Heart left ventricle (tissue), 16 donors: ENCODE measurements at regions of chr3 and their contacts with region 1.

Region 1: GRCh38 chr3:186617038-186617946 is 4.4 kb downstream of the AHSG start:
- DNase-seq: peak; percentile 75 to 92 (median 84)
- ATAC-seq: peak; percentile 83 to 97 (median 96)
- H3K4me3 ChIP-seq: peak overlapping the region in 5 of 12 donors; percentile 2 to 30 (median 27)
- H3K27ac ChIP-seq: peak overlapping the region in 1 of 12 donors; percentile 25
- H3K4me1 ChIP-seq: peaks cover 0 to 19% (median 4%) of the 10 kb centered on the region in 12 donors
- H3K27me3 ChIP-seq: peaks cover 0 to 46% (median 0%) of the 10 kb centered on the region in 9 donors
- CTCF ChIP-seq: peak; percentile 74 to 90 (median 82)
- POLR2A ChIP-seq: no peak

Region 2: DNA sequence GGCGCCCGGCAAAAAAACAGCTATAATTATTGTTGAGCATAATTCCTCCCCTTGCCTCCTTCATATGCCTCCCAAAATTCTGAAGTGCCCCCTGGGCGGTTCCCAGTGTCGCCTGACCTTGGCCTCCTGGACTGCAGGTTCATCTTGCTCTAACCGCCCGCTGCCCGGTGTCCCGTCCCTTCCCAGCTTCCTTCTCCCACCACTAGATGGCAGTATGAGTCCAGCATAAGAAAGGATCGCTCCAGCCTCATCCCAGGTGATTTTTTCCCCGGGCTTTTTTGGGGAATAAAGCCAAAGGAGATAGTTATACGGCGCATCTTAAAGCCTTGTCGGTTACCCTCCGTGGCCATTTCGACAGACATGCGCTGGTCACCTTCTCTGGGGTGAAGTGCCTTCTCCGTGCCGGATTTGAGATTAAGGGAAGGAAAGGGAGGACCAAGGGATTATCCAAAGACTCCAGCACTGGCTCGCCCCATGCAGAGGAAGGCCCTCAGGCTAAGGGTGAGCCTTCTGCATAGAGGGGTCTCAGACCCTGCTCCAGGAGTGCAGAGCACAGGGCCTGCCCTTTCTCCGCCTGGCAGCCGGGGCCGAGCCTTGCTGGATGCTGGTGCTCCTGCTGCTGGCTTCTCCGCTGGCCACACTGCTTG is 633.7 kb before region 1 on chr3:
- intact Hi-C with region 1: loop called in 5 of 10 experiments (anchors 2 to 10 kb)
- DNase-seq: peak; percentile 57 to 75 (median 66)
- ATAC-seq: peak; percentile 82 to 96 (median 94)
- H3K4me3 ChIP-seq: peak overlapping the region in 1 of 12 donors; percentile 26
- H3K27ac ChIP-seq: no peak overlapping the region
- H3K4me1 ChIP-seq: peaks cover 0 to 14% (median 4%) of the 10 kb centered on the region in 12 donors
- H3K27me3 ChIP-seq: peaks cover 0 to 11% (median 0%) of the 10 kb centered on the region in 9 donors
- CTCF ChIP-seq: peak; percentile 79 to 96 (median 89)
- POLR2A ChIP-seq: no peak

Region 3: GRCh38 chr3:186361762-186362536 is 255.3 kb before region 1 on chr3 and contains the start of gene DGKG:
- intact Hi-C with region 1: no loop called
- DNase-seq: peak; percentile 68 to 81 (median 76)
- ATAC-seq: peak; percentile 63 to 85 (median 82)
- H3K4me3 ChIP-seq: peak within 1 kb of the TSS; percentile 51 to 89 (median 67)
- H3K27ac ChIP-seq: peak within 1 kb of the TSS; percentile 19 to 94 (median 78)
- H3K4me1 ChIP-seq: peaks cover 0 to 36% (median 25%) of the 10 kb centered on the region in 12 donors
- H3K27me3 ChIP-seq: peaks cover 0 to 40% (median 4%) of the 10 kb centered on the region in 9 donors
- CTCF ChIP-seq: no peak
- POLR2A ChIP-seq: peak; percentile 47 to 73
- total RNA-seq, gene DGKG: 21.6 to 59.3 (median 35.9) TPM

Region 4: DNA sequence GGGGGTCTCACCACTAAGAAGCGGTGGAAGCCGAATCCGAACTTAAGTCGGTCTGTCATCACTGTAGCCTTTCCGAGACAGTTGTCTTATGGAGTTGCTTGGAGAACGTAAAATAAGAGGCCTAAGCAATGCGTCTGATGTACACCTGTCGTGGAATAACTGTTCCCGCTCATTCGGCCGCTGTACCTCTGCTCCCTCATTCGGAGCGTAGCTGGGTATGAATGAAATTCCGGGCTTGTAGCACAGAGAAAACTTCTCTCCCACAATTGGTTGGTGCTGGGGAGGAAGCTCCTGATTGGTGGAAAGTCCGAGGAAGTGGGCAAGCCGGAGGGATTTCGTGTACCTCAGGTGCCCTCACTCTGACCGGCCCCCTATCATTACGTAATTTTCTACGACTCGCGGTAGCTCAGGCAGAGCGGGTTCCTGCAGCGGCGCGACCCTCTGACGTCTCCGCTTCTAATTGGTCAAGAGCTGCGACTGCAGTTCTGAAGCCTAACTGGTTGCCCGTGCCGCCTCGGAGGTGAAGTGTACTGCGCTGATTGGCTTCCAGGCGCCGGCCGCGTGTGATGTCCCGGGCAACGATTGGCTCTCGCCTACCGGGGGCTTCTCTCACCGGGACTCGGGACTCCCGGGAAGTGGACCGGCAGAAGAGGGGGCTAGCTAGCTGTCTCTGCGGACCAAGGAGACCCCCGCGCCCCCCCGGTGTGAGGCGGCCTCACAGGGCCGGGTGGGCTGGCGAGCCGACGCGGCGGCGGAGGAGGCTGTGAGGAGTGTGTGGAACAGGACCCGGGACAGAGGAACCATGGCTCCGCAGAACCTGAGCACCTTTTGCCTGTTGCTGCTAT is 47.0 kb before region 1 on chr3 and contains the start of gene DNAJB11:
- intact Hi-C with region 1: no loop called
- DNase-seq: peak; percentile 99 to 100 (median 99)
- ATAC-seq: peak; percentile 94 to 97 (median 96)
- H3K4me3 ChIP-seq: peak within 1 kb of the TSS; percentile 71 to 99 (median 90)
- H3K27ac ChIP-seq: peak within 1 kb of the TSS; percentile 43 to 95 (median 88)
- H3K4me1 ChIP-seq: peaks cover 5 to 47% (median 32%) of the 10 kb centered on the region in 12 donors
- H3K27me3 ChIP-seq: no peaks in the 10 kb centered on the region
- CTCF ChIP-seq: no peak
- POLR2A ChIP-seq: peak in 1 of 2 donors; percentile 68
- total RNA-seq, gene DNAJB11: 17.3 to 37.7 (median 25.2) TPM

Region 5: GRCh38 chr3:186754006-186754405 is 136.7 kb after region 1 on chr3:
- intact Hi-C with region 1: loop called (anchors 1 to 5 kb)
- DNase-seq: no peak
- ATAC-seq: no peak
- H3K4me3 ChIP-seq: no peak overlapping the region
- H3K27ac ChIP-seq: no peak overlapping the region
- H3K4me1 ChIP-seq: peaks cover 0 to 10% (median 2%) of the 10 kb centered on the region in 12 donors
- H3K27me3 ChIP-seq: peaks cover 0 to 4% (median 0%) of the 10 kb centered on the region in 9 donors
- CTCF ChIP-seq: no peak
- POLR2A ChIP-seq: no peak

Region 6: GRCh38 chr3:186821429-186822367 is 204.4 kb after region 1 on chr3:
- intact Hi-C with region 1: loop called (anchors 1 to 5 kb)
- DNase-seq: no peak
- ATAC-seq: peak in 1 of 4 donors; percentile 47
- H3K4me3 ChIP-seq: no peak overlapping the region
- H3K27ac ChIP-seq: no peak overlapping the region
- H3K4me1 ChIP-seq: peaks cover 0 to 15% (median 5%) of the 10 kb centered on the region in 12 donors
- H3K27me3 ChIP-seq: peaks cover 0 to 34% (median 9%) of the 10 kb centered on the region in 9 donors
- CTCF ChIP-seq: peak; percentile 52 to 77 (median 66)
- POLR2A ChIP-seq: no peak

Region 7: GRCh38 chr3:186839874-186840641 is 222.8 kb after region 1 on chr3:
- intact Hi-C with region 1: no loop called
- DNase-seq: no peak
- ATAC-seq: no peak
- H3K4me3 ChIP-seq: no peak overlapping the region
- H3K27ac ChIP-seq: no peak overlapping the region
- H3K4me1 ChIP-seq: no peaks in the 10 kb centered on the region
- H3K27me3 ChIP-seq: peaks cover 0 to under 1% (median 0%) of the 10 kb centered on the region in 9 donors
- CTCF ChIP-seq: no peak
- POLR2A ChIP-seq: no peak

Region 8: GRCh38 chr3:187565701-187566100 is 948.4 kb after region 1 on chr3:
- intact Hi-C with region 1: no loop called
- DNase-seq: no peak
- ATAC-seq: no peak
- H3K4me3 ChIP-seq: no peak overlapping the region
- H3K27ac ChIP-seq: no peak overlapping the region
- H3K4me1 ChIP-seq: peaks cover 0 to 24% (median 9%) of the 10 kb centered on the region in 12 donors
- H3K27me3 ChIP-seq: peaks cover 0 to 3% (median 0%) of the 10 kb centered on the region in 9 donors
- CTCF ChIP-seq: no peak
- POLR2A ChIP-seq: no peak

Region 9: GRCh38 chr3:187714404-187714979 is 1097.2 kb after region 1 on chr3:
- intact Hi-C with region 1: loop called in 1 of 10 experiments (anchors 10 kb)
- DNase-seq: peak in 4 of 5 donors; percentile 59 to 63 (median 62)
- ATAC-seq: peak; percentile 70 to 90 (median 90)
- H3K4me3 ChIP-seq: no peak overlapping the region
- H3K27ac ChIP-seq: peak overlapping the region in 1 of 12 donors; percentile 3
- H3K4me1 ChIP-seq: peaks cover 0 to 9% (median 0%) of the 10 kb centered on the region in 12 donors
- H3K27me3 ChIP-seq: no peaks in the 10 kb centered on the region
- CTCF ChIP-seq: peak; percentile 87 to 97 (median 92)
- POLR2A ChIP-seq: no peak